Right cardiac atrium (tissue), 5 donors: ENCODE measurements at regions of chr9 and their contacts with region 1.

Region 1: GRCh38 chr9:4050916-4051315 is 249.0 kb downstream of the GLIS3 start:
- DNase-seq: no peak
- ATAC-seq: no peak
- H3K4me3 ChIP-seq: no peak overlapping the region
- H3K27ac ChIP-seq: no peak overlapping the region
- H3K4me1 ChIP-seq: no peaks in the 10 kb centered on the region
- H3K27me3 ChIP-seq: no peaks in the 10 kb centered on the region

Region 2: GRCh38 chr9:4114569-4115505 is 63.9 kb after region 1 on chr9:
- intact Hi-C with region 1: loop called in 1 of 4 experiments (anchors 5 kb)
- DNase-seq: peak; percentile 28 to 62 (median 48)
- ATAC-seq: peak; percentile 53
- H3K4me3 ChIP-seq: no peak overlapping the region
- H3K27ac ChIP-seq: no peak overlapping the region
- H3K4me1 ChIP-seq: no peaks in the 10 kb centered on the region
- H3K27me3 ChIP-seq: no peaks in the 10 kb centered on the region